ENCODE measurements at regions of chr19 and their contacts with region 1.

Region 1: GRCh38 chr19:10979951-10980381 is 19.1 kb downstream of the SMARCA4 start:
- DNase-seq: peak; percentile 95
- H3K4me3 ChIP-seq: peak overlapping the region; percentile 62
- H3K27ac ChIP-seq: peak overlapping the region; percentile 99
- H3K4me1 ChIP-seq: peaks cover 76% of the 10 kb centered on the region
- CTCF ChIP-seq: peak; percentile 75

Region 2: DNA sequence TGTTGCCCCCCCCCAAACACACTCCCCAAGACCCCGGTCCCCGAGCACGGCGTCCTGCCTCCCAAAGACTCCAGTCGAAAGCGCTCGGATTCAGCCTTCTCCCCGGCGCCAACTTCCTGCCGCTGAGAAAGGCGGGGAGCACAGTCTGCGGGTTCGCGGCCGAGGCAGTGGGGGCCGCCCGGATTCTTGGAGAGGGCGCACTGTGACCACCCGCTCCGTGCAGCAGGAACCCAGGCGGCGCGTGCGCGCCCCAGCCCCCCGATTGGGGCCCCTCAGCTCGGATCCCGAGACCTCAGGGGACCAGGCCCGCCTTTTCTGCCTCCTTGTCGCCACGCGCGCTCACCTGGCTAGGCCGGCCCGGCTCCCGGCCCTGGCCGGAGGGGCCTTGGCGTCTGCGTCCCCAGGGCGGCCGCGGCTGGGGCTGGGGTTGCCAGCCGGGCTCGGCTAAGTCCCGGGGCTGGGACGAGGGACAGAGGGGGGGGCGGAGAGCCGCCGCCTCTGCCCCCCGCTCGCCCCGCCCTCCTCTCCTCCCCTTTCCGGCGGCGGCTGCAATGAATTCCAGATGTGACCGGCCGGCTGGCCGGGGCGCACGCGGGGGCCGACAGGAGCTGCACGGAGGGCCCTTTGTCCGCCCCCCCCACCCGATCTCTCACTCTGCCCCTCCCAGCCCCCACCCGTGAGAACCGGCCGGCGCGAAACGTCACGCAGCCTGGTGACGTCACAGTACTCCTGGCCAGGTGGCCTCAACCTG is 748.9 kb before region 1 on chr19 and contains the start of gene S1PR2:
- CTCF ChIA-PET with region 1: no interaction called
- POLR2A ChIA-PET with region 1: no interaction called
- intact Hi-C with region 1: loop called (anchors 10 kb)
- DNase-seq: peak; percentile 89
- H3K4me3 ChIP-seq: peak within 1 kb of the TSS; percentile 95
- H3K27ac ChIP-seq: peak within 1 kb of the TSS; percentile 95
- H3K4me1 ChIP-seq: peaks cover 81% of the 10 kb centered on the region
- CTCF ChIP-seq: no peak
- total RNA-seq, gene S1PR2: 27.0 and 27.8 TPM in 2 replicates

Region 3: DNA sequence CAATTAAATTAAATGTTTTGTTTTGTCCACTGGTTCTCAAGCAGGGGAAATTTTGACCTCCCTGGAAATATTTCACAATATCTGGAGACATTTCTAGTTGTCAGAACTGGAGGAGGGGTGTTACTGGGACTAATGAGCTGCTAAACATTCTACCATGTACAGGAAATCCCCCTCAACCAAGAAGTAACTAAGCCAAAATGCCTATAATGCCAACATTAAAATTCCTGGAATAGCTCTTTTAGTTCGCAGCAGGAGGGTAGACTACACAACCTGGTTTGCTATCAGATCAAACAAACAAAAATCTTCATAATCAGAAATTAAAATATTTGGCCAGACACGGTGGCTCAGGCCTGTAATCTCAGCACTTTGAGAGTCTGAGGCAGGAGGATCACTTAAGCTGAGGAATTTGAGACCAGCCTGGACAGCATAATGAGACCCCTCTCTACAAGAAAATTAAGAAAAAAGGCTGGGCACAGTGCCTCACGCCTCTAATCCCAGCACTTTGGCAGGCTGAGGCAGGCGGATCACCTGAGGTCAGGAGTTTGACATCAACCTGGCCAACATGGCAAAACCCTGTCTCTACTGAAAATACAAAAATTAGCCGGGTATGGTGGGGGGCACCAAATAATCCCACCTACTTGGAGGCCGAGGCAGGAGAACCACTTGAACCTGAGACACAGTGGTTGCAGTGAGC is 32.9 kb before region 1 on chr19:
- CTCF ChIA-PET with region 1: interaction called, 3 read pairs
- POLR2A ChIA-PET with region 1: no interaction called
- intact Hi-C with region 1: loop called (anchors 1 kb)
- DNase-seq: no peak
- H3K4me3 ChIP-seq: no peak overlapping the region
- H3K27ac ChIP-seq: no peak overlapping the region
- H3K4me1 ChIP-seq: peaks cover 23% of the 10 kb centered on the region
- CTCF ChIP-seq: no peak

Region 4: GRCh38 chr19:10962863-10963262 is 17.1 kb before region 1 on chr19:
- CTCF ChIA-PET with region 1: interaction called, 3 read pairs
- POLR2A ChIA-PET with region 1: interaction called, 43 read pairs
- intact Hi-C with region 1: loop called (anchors 1 kb)
- DNase-seq: no peak
- H3K4me3 ChIP-seq: peak overlapping the region; percentile 87
- H3K27ac ChIP-seq: peak overlapping the region; percentile 99
- H3K4me1 ChIP-seq: peaks cover 59% of the 10 kb centered on the region
- CTCF ChIP-seq: no peak

Region 5: DNA sequence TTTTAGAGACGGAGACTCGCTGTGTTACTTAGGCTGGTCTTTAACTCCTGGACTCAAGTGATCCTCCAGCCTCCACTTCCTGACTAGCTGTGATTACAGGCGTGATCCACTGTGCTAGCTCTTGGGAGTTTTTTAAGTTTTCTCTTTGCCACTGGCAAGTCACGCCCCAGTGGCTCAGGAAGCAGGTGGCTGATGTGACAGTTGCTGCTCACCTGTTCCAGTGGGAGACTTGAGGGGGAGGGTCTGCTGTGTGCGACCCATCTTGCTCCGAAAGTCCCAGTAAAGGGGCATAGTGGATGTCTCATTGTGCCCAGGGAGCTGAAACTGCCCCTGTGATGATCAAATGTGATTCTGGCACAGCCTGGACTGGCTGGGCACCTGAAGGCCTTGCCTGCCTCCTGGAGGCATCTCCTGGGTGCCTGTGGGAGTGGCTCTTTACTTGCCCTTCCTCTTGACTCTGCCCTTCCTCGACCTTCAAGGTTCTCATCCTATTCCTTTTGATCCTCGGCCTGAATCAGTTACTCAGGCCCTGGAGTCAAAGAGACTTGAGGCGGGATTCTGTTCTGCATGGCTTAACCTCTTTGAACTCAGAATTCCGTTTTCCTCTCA is 11.3 kb before region 1 on chr19:
- CTCF ChIA-PET with region 1: interaction called, 3 read pairs
- POLR2A ChIA-PET with region 1: interaction called, 43 read pairs
- intact Hi-C with region 1: loop called (anchors 1 kb)
- DNase-seq: peak; percentile 98
- H3K4me3 ChIP-seq: peak overlapping the region; percentile 56
- H3K27ac ChIP-seq: peak overlapping the region; percentile 99
- H3K4me1 ChIP-seq: peaks cover 97% of the 10 kb centered on the region
- CTCF ChIP-seq: no peak

Region 6: DNA sequence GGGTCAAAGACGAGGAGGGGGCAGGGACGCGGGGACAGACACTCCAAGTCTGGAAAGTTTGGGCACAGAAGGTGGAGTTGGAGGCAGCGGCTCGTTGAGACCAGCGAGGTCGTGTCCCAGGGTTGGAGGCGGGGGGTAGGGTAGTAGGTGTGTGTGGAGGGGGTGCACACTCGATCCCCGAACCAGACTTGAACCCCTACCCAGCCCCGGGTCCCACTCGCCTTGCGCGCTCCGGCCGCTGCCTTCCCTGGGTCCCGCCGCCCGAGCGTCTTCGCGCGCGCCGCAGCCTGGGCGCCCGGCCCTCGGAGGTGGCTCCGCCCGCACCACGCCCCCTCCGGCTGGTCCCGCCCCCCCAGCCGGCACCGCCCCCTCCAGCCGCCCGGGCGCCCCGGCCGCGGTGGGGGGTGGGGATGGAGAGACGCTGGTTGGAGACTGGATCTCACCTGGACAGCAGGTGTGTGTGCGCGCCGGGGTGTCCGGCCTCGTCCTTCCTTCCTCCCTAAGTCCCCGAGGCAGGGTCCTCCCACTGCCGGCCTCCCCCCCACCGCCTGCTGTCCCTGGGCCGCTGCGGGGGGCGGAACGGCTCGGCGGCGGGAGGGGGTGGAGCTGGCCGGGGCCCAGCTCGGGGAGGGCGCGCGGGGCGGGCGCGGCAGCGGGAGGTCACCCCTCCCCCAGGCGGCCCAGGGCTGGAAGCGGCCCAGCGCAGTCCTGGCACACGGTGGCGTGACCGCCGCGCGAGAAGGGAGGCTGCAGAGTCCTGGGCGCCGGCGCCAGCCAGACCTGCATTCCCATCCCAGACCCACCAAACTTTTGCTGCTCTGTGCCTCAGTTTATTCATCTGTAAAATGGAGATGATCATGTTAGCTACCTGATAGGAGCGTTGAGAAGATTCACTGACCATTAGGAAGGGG is 217.6 kb after region 1 on chr19 and contains the start of gene KANK2:
- CTCF ChIA-PET with region 1: no interaction called
- POLR2A ChIA-PET with region 1: no interaction called
- intact Hi-C with region 1: loop called (anchors 10 kb)
- DNase-seq: peak; percentile 86
- H3K4me3 ChIP-seq: peak within 1 kb of the TSS; percentile 97
- H3K27ac ChIP-seq: peak within 1 kb of the TSS; percentile 95
- H3K4me1 ChIP-seq: peaks cover 53% of the 10 kb centered on the region
- CTCF ChIP-seq: no peak; the same call in 1 of the 2 replicates
- total RNA-seq, gene KANK2: 135 and 186 TPM in 2 replicates